A673 (cell line): ENCODE measurements at regions of chr4 and their contacts with region 1.

Region 1: GRCh38 chr4:123396307-123397143 is at the start of gene SPRY1:
- DNase-seq: peak; percentile 96
- H3K4me3 ChIP-seq: peak within 1 kb of the TSS; percentile 76
- H3K27ac ChIP-seq: peak within 1 kb of the TSS; percentile 36
- H3K4me1 ChIP-seq: peaks cover 6% of the 10 kb centered on the region
- H3K27me3 ChIP-seq: no peaks in the 10 kb centered on the region
- CTCF ChIP-seq: no peak
- total RNA-seq, gene SPRY1: 6.0 and 6.8 TPM in 2 replicates

Region 2: GRCh38 chr4:123127218-123127617 is 269.3 kb before region 1 on chr4:
- CTCF ChIA-PET with region 1: interaction called, 4 read pairs
- POLR2A ChIA-PET with region 1: no interaction called
- intact Hi-C with region 1: loop called (anchors 5 kb)
- DNase-seq: peak; percentile 55
- H3K4me3 ChIP-seq: no peak overlapping the region
- H3K27ac ChIP-seq: peak overlapping the region; percentile 72
- H3K4me1 ChIP-seq: peaks cover 23% of the 10 kb centered on the region
- H3K27me3 ChIP-seq: no peaks in the 10 kb centered on the region
- CTCF ChIP-seq: peak; percentile 62; the same call in 1 of the 2 replicates

Region 3: DNA sequence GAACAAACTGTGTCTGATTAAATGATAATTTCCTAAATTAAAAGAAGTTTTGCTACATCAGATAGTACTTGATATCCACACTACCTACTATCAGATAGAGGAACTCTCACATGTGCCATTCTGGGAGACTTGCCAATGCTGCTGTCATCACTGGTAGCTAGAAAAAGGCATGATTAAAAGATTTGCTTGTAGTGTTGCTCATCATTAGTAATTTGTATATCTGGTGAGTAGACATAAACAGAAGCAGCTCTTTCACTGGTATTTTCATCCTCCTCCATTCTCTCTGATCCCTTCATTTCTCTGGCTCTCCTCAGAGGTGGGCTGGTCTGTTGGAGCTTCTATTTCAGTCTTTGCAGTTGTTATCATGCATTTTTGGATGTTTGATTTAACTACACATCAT is 56.1 kb after region 1 on chr4:
- CTCF ChIA-PET with region 1: no interaction called
- POLR2A ChIA-PET with region 1: no interaction called
- intact Hi-C with region 1: no loop called
- DNase-seq: peak; percentile 80
- H3K4me3 ChIP-seq: no peak overlapping the region
- H3K27ac ChIP-seq: no peak overlapping the region
- H3K4me1 ChIP-seq: peaks cover 4% of the 10 kb centered on the region
- H3K27me3 ChIP-seq: no peaks in the 10 kb centered on the region
- CTCF ChIP-seq: no peak

Region 4: GRCh38 chr4:123505095-123506010 is 108.8 kb after region 1 on chr4:
- CTCF ChIA-PET with region 1: no interaction called
- POLR2A ChIA-PET with region 1: no interaction called
- intact Hi-C with region 1: loop called (anchors 5 kb)
- DNase-seq: peak; percentile 82
- H3K4me3 ChIP-seq: peak overlapping the region; percentile 46
- H3K27ac ChIP-seq: peak overlapping the region; percentile 15
- H3K4me1 ChIP-seq: peaks cover 5% of the 10 kb centered on the region
- H3K27me3 ChIP-seq: no peaks in the 10 kb centered on the region
- CTCF ChIP-seq: no peak

Region 5: GRCh38 chr4:123564758-123565346 is 168.3 kb after region 1 on chr4:
- CTCF ChIA-PET with region 1: no interaction called
- POLR2A ChIA-PET with region 1: no interaction called
- intact Hi-C with region 1: loop called (anchors 2 kb)
- DNase-seq: peak; percentile 85
- H3K4me3 ChIP-seq: no peak overlapping the region
- H3K27ac ChIP-seq: no peak overlapping the region
- H3K4me1 ChIP-seq: no peaks in the 10 kb centered on the region
- H3K27me3 ChIP-seq: no peaks in the 10 kb centered on the region
- CTCF ChIP-seq: peak; percentile 97

Region 6: DNA sequence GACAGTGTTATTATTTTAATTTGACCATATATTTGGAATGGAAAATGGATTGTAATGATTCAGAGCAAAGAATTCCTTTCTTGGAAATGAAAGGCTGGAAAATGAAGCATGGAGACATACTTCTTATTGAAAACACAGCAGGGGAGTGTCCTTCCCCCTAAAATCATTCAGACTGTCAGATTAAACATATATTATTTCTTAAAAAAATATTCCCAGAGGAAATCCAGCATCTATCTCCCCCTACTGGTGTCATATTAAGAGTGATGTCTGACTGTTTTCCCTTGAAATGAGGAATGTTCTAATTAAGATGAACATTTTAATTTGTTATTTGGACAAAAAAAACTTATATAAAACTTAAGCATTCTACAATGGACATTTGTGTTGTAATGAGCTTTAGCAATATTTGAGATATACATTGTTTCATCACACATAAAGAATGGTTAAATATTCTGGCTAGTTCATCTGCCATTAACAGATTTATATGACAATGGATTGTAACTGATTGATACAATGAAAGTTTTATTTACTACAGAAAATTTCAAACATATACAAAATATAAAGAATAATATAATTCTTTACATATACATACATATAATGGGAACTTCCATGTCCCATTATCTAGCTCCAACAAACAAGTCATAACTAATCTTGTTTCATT is 264.7 kb after region 1 on chr4:
- CTCF ChIA-PET with region 1: no interaction called
- POLR2A ChIA-PET with region 1: no interaction called
- intact Hi-C with region 1: loop called (anchors 2 kb)
- DNase-seq: peak; percentile 46
- H3K4me3 ChIP-seq: no peak overlapping the region
- H3K27ac ChIP-seq: no peak overlapping the region
- H3K4me1 ChIP-seq: peaks cover 7% of the 10 kb centered on the region
- H3K27me3 ChIP-seq: no peaks in the 10 kb centered on the region
- CTCF ChIP-seq: peak; percentile 68

Region 7: DNA sequence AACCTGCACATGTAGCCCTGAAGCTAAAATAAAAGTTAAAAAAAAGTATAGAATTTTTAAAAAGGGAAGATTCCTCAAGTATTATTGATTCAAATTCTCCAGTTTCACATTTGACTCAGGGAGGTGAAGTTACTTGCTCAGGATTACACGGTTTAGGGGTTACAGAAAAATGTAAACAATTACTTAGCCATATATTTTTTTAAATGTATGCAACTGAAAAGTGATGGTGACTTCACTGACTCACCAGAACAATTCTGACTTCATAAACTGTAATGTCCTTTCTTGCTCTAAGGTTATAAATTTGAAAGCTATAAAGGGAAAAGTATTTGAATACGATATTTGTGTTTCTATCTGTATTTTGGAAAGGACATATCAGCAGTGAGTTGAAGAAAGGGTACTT is 371.3 kb after region 1 on chr4:
- CTCF ChIA-PET with region 1: no interaction called
- POLR2A ChIA-PET with region 1: no interaction called
- intact Hi-C with region 1: loop called (anchors 10 kb)
- DNase-seq: no peak
- H3K4me3 ChIP-seq: no peak overlapping the region
- H3K27ac ChIP-seq: no peak overlapping the region
- H3K4me1 ChIP-seq: no peaks in the 10 kb centered on the region
- H3K27me3 ChIP-seq: no peaks in the 10 kb centered on the region
- CTCF ChIP-seq: no peak

Region 8: GRCh38 chr4:124262211-124263179 is 866.0 kb after region 1 on chr4:
- CTCF ChIA-PET with region 1: no interaction called
- POLR2A ChIA-PET with region 1: no interaction called
- intact Hi-C with region 1: loop called (anchors 10 kb)
- DNase-seq: peak; percentile 91
- H3K4me3 ChIP-seq: no peak overlapping the region
- H3K27ac ChIP-seq: no peak overlapping the region
- H3K4me1 ChIP-seq: no peaks in the 10 kb centered on the region
- H3K27me3 ChIP-seq: no peaks in the 10 kb centered on the region
- CTCF ChIP-seq: peak; percentile 92